ENCODE measurements at regions of chr1 and their contacts with region 1.

Region 1: GRCh38 chr1:110554871-110555801 is 36.2 kb upstream of the KCNA10 start:
- DNase-seq: peak; percentile 50 to 73 (median 70)
- H3K4me3 ChIP-seq: peak overlapping the region in 5 of 7 experiments; percentile 9 to 66 (median 52)
- H3K27ac ChIP-seq: no peak overlapping the region
- H3K4me1 ChIP-seq: peaks cover 0 to 11% (median 8%) of the 10 kb centered on the region in 4 experiments
- H3K27me3 ChIP-seq: peaks cover 5 to 69% (median 37%) of the 10 kb centered on the region in 5 experiments

Region 2: DNA sequence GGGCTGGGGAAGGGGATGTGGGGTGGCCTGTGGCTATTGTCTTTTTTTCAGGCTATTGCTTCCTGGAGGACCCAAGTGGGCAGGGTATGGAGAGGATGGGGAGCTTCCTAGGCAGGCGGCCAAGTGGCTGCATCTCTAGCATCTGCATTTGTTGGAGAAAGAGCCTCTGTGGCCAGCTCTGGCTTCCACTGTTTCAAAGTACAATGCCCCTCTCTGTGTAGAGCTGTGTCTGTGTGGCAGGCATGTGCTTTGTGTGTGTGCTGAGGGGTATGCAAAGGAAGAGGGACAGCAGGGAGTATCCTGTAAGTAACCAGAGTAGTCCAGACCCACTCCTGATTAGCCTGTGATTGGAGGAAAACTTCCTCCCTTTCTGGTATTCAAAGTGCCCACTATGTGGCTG is 10.4 kb after region 1 on chr1:
- CTCF ChIA-PET with region 1: interaction called, 10 read pairs
- POLR2A ChIA-PET with region 1: no interaction called
- DNase-seq: no peak
- H3K4me3 ChIP-seq: no peak overlapping the region
- H3K27ac ChIP-seq: no peak overlapping the region
- H3K4me1 ChIP-seq: no peaks in the 10 kb centered on the region
- H3K27me3 ChIP-seq: peaks cover 3 to 25% (median 14%) of the 10 kb centered on the region in 5 experiments

Region 3: DNA sequence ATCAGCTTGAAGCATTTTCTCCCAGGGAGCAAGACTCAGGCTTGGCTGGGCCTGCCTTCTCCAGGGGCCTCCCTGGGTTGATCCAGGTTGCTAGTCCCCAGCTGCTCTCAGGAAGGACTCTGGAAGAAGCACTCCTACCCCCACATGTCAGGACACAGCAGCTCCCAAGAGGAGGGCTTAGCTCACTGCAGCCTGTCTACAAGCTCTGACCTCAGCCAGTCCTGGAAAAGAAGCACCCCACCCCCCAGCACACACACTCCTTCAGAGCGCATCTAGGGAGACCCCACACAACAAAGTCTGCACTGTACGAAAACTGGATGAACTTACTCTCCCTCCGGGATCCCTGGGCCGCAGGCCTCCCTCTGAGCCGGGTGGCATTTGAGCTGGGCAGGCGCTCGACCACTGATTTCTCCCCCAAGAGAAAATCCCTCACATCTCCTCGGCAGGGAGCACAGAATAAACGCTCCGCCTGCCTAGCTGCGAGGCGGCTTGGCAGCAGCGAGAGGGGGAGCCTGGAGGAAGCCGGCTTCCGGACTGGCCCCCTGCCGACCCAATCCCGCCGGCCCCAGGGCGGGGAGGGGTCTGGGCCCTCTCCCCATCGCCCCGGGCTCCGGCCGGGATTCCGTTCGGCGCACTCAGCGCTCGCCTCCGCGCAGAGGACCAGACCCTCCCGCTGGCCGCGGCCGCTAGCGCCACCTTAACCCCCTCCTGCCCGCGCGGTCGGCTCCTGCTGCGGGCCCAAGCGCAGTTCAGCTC is 50.9 kb after region 1 on chr1 and contains the start of gene KCNA2:
- CTCF ChIA-PET with region 1: interaction called, 17 read pairs
- POLR2A ChIA-PET with region 1: no interaction called
- DNase-seq: peak in 1 of 3 donors; percentile 50
- H3K4me3 ChIP-seq: peak within 1 kb of the TSS; percentile 24 to 74 (median 55)
- H3K27ac ChIP-seq: no peak within 1 kb of the TSS
- H3K4me1 ChIP-seq: peaks cover 0 to 22% (median 17%) of the 10 kb centered on the region in 4 experiments
- H3K27me3 ChIP-seq: peaks cover 0 to 71% (median 52%) of the 10 kb centered on the region in 5 experiments

Region 4: DNA sequence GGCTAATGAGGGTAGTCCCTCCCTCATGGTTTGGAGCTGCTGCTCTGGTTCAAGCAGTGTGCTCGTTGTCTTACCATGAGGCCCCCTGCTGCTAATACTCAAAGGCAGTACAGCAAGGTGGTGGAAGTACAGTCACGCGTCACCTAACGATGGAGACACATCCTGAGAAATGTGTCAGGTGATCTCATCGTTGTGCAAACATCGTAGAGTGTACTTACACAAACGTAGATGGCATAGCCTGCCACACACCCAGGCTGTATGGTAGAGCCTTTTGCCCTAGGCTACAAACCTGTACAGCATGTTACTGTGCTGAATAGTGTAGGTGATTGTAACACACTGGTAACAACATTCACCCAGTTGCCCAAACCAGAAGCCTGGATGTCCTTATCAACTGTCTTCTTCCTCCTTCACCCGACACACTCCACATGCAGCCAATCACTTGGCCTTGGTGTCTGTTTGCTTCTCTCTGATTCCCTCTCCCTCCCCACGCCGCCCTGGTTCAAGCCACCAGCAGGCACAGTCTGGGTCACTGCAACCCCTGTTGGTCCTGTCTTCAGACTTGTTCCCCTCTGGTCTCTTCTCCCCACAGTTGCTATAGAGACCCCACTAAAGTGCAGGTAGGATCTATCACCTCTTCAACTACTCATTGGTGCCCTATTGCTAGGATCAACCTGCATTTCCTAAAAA is 57.1 kb after region 1 on chr1:
- CTCF ChIA-PET with region 1: interaction called, 17 read pairs
- POLR2A ChIA-PET with region 1: no interaction called
- DNase-seq: no peak
- H3K4me3 ChIP-seq: no peak overlapping the region
- H3K27ac ChIP-seq: no peak overlapping the region
- H3K4me1 ChIP-seq: peaks cover 4 to 24% (median 22%) of the 10 kb centered on the region in 4 experiments
- H3K27me3 ChIP-seq: peaks cover 0 to 44% (median 27%) of the 10 kb centered on the region in 5 experiments

Measured in common myeloid progenitor, CD34-positive (primary cell).